PC-9 (cell line): ENCODE measurements at regions of chr4 and their contacts with region 1.

Region 1: GRCh38 chr4:73653695-73654106 is 33.5 kb upstream of the RASSF6 start:
- DNase-seq: no peak
- H3K4me3 ChIP-seq: no peak overlapping the region
- H3K27ac ChIP-seq: no peak overlapping the region
- H3K4me1 ChIP-seq: no peaks in the 10 kb centered on the region
- H3K27me3 ChIP-seq: no peaks in the 10 kb centered on the region
- CTCF ChIP-seq: peak; percentile 70

Region 2: DNA sequence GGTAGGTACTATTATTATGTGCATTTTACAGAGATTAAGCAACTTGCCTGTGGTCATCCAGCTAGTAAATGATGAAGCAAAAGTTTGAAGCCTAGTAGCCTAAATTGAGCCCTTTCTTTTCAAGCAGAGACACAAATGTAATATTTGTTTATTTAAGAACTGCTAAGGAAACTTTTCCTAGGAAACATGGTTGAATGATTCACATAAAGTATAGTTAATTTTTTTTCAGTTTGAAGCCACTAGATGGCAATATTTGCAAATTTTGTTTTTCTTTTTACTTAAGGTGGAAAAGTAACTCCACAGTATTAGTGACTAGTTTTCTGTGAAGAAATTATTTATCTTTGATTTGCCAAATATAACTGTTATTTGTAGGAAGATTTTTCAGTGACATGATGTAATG is 342.3 kb before region 1 on chr4:
- CTCF ChIA-PET with region 1: no interaction called
- POLR2A ChIA-PET with region 1: no interaction called
- intact Hi-C with region 1: loop called (anchors 2 kb)
- DNase-seq: no peak
- H3K4me3 ChIP-seq: no peak overlapping the region
- H3K27ac ChIP-seq: no peak overlapping the region
- H3K4me1 ChIP-seq: no peaks in the 10 kb centered on the region; the same call in 1 of the 2 replicates
- H3K27me3 ChIP-seq: no peaks in the 10 kb centered on the region
- CTCF ChIP-seq: peak; percentile 54

Region 3: GRCh38 chr4:73573794-73574406 is 79.8 kb before region 1 on chr4:
- CTCF ChIA-PET with region 1: no interaction called
- POLR2A ChIA-PET with region 1: no interaction called
- intact Hi-C with region 1: loop called (anchors 2 kb)
- DNase-seq: peak in 1 of 2 experiments; percentile 44
- H3K4me3 ChIP-seq: no peak overlapping the region
- H3K27ac ChIP-seq: no peak overlapping the region
- H3K4me1 ChIP-seq: no peaks in the 10 kb centered on the region
- H3K27me3 ChIP-seq: no peaks in the 10 kb centered on the region
- CTCF ChIP-seq: peak; percentile 72

Region 4: DNA sequence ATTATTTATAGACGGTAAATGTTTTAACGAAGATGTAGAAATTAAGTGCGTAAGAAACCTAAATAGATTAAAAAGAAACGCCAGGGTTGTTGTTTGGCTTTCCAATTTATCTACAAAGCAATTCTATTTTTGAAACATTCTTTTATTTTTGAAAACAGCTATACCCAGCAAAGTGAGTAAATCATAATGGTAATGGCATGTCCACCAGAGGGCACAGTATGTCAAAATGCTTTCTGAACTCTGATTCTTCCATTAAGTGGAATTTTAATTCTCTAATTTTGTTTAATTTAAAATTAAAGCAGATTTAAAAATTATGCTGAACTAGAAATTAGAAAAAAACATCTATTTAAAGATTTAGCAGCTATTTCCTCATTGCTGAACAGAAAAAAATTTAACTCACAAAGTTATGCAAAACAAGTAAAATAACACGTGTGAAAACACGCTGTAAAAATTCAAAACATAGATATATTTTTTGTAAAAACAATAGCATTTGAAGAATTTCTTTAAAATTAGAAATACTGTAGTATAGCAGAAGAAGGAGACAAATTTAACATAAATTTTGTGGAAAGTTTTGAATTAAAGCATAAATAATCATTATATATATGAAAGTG is 60.0 kb before region 1 on chr4:
- CTCF ChIA-PET with region 1: interaction called, 5 read pairs
- POLR2A ChIA-PET with region 1: no interaction called
- intact Hi-C with region 1: loop called (anchors 1 kb)
- DNase-seq: no peak
- H3K4me3 ChIP-seq: no peak overlapping the region
- H3K27ac ChIP-seq: no peak overlapping the region
- H3K4me1 ChIP-seq: peaks cover 3% of the 10 kb centered on the region; the same call in 1 of the 2 replicates
- H3K27me3 ChIP-seq: no peaks in the 10 kb centered on the region
- CTCF ChIP-seq: peak; percentile 68